Lower leg skin (tissue), 4 donors: ENCODE measurements at regions of chr5 and their contacts with region 1.

Region 1: DNA sequence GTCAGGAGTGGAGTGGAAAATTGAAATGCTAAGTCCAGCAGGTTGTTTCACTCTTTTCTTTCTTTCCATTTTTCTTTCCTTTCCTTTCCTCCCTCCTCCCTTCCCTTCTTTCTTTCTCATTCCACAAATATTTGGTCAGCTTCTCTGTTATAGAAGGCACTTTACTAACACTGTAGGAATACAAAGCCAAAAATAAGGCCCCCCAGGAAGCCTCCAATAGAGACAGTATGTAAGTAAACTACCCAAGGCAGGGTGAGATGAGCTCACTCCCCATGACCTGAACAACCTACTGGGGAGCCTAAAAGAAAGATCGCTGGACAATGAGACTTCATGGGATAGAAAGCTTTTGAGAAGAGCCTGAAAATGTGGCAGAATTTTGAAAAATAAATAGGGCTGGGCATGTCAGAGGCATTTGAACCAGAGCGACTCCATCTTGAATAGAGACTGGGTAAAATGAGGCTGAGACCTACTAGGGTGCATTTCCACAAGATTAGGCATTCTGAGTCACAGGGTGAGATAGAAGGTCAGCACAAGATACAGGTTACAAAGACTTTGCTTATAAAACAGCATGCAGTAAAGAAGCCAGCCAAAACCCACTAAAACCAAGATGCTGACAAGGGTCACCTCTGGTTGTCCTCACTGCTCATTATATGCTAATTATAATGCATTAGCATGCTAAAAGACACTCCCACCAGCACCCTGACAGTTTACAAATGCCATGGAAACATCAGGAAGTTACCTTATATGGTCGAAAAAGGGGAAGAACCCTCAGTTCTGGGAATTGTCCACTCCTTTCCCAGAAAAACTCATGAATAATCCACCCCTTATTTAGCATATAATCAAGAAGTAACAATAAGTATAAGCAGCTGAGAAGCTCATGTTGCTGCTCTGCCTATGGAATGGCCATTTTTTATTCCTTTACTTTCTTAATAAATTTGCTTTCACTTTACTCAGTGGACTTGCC is 158.9 kb upstream of the EGFLAM start:
- DNase-seq: no peak
- H3K4me3 ChIP-seq: no peak overlapping the region
- CTCF ChIP-seq: no peak
- POLR2A ChIP-seq: no peak

Region 2: GRCh38 chr5:38009749-38010358 is 89.6 kb before region 1 on chr5:
- intact Hi-C with region 1: no loop called
- DNase-seq: no peak
- H3K4me3 ChIP-seq: no peak overlapping the region
- CTCF ChIP-seq: no peak
- POLR2A ChIP-seq: no peak

Region 3: DNA sequence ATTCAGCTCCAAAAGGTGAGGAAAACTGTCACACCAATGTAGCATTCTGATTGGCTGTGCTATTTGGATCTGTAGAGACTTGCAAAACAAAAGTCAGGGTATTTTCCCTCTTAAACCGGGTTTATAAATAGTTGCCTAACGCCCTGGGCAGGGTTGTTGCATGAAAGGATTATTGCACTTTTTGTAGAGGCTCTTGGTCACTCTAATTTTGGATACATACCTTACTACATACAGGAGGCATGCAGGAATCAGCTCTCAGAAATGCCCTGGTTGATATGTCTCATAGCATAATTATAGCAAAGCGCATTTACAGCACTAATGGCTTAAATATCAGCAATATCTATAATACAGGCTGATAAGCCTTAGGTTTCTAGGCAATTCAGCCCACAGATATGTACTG is 59.7 kb before region 1 on chr5:
- intact Hi-C with region 1: loop called (anchors 2 kb)
- DNase-seq: no peak
- H3K4me3 ChIP-seq: no peak overlapping the region
- CTCF ChIP-seq: no peak
- POLR2A ChIP-seq: no peak

Region 4: DNA sequence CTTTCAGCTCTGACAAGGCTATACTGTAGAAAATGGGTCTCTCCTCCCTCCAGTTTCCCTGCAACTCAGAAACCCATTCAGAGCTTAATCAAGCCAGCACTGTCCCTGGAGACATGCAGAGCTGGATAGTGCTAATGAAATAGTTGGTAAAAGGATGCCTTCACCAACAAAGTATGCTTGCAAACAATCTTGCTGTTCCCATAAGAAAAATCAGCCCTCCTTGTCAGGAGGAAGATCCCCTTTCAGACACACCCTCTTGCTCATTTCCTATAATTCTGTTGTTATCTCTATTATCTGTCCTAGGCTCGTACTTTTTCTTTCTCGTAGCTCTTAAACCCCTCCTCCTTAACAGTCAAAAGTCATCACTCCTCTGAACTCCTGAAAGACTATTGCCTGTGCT is 736.4 kb after region 1 on chr5:
- intact Hi-C with region 1: no loop called
- DNase-seq: no peak
- H3K4me3 ChIP-seq: no peak overlapping the region
- CTCF ChIP-seq: no peak
- POLR2A ChIP-seq: no peak